GM10248 (cell line): ENCODE measurements at regions of chr6 and their contacts with region 1.

Region 1: GRCh38 chr6:36360241-36361054 is 23.8 kb upstream of the BNIP5 start:
- DNase-seq: peak; percentile 78
- CTCF ChIP-seq: peak; percentile 81

Region 2: GRCh38 chr6:36027501-36028087 is 332.9 kb before region 1 on chr6 and contains the start of gene MAPK14:
- CTCF ChIA-PET with region 1: interaction called, 10 read pairs
- POLR2A ChIA-PET with region 1: no interaction called
- DNase-seq: peak; percentile 98
- CTCF ChIP-seq: peak; percentile 87

Region 3: GRCh38 chr6:36123257-36124139 is 236.9 kb before region 1 on chr6:
- CTCF ChIA-PET with region 1: interaction called, 28 read pairs
- POLR2A ChIA-PET with region 1: no interaction called
- DNase-seq: peak; percentile 82
- CTCF ChIP-seq: peak; percentile 91

Region 4: DNA sequence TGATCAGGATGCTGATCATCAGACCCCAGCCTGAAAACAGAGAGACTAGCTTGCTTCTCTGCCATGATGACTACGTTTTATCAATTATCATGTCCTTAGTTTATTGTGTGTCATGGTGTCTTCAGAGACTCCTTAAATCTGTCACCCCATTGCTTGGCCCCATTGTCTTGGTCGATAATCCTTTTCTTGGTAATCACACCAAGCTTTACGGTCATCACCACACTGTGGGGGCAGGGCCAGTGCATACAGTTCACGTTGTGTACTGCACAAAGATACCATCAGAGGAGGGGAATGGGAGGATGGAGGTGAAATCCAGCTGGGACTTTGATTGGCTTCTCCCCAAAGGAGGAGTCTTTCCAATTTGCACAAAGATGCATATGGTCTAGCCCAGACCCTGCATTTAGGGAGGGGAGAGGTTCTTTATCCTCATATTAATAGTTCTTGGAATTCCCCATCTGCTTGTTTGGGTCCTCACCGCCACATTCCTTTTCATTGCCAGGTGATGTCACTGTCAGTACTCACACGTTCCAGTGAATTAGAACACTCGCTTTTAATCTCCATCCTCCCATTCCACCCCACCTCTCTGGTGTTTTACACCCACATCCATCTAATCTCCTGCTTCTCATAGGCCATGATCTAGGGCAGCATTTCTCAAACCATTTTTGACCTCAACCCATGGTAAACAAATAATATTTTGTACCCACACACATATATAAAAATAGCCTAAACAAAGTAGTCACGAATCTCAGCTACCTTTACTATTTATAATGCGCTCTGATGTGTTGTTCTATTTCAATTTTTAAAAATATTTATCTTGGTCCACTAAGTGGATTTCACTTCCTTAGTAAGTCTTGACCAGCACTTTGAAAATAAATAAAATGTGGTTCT is 21.3 kb after region 1 on chr6:
- CTCF ChIA-PET with region 1: interaction called, 29 read pairs
- POLR2A ChIA-PET with region 1: no interaction called
- DNase-seq: no peak
- CTCF ChIP-seq: no peak

Region 5: GRCh38 chr6:36392621-36393020 is 32.2 kb after region 1 on chr6:
- CTCF ChIA-PET with region 1: no interaction called
- POLR2A ChIA-PET with region 1: no interaction called
- DNase-seq: no peak
- CTCF ChIP-seq: no peak

Region 6: GRCh38 chr6:36493859-36494258 is 133.4 kb after region 1 on chr6:
- CTCF ChIA-PET with region 1: no interaction called
- POLR2A ChIA-PET with region 1: no interaction called
- DNase-seq: no peak
- CTCF ChIP-seq: no peak